GM12878 (cell line): ENCODE measurements at regions of chr12 and their contacts with region 1.

Region 1: DNA sequence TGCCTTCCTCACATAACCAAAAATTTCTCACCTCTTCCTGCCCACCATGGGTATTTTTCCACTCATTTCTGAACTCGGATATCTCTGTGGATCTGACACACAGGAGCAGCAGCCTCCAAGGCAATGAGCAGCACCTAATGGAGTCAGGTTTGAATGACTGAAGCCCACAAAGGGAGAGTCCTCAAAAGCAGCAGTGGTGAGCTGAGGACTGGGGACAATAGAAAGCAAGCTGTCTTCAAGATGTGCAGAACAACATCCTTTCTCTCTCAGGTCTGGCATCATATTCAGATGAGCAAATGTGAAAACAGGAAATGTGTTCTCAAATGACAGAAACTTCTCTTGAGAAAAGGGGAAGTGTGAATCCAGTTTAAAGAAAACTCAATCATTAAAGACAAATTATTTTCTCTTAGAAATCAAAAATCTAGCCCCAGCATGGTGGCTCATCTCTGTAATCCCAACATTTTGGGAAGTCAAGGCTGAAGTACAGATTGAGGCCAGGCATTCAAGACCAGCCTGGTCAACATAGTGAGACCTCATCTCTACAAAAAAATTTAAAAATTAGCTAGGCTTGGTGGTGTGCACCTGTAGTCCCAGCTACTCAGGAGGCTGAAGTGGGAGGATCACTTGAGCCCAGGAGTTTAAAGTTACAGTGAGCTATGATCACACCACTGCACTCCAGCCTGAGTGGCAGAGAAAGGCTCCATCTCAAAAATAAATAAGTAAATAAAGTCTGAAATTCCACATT is 54.2 kb downstream of the C12orf42 start:
- DNase-seq: peak; percentile 97
- ATAC-seq: peak; percentile 98
- H3K4me3 ChIP-seq: peak overlapping the region; percentile 58
- H3K27ac ChIP-seq: peak overlapping the region; percentile 71
- H3K4me1 ChIP-seq: peaks cover 22% of the 10 kb centered on the region
- H3K27me3 ChIP-seq: no peaks in the 10 kb centered on the region
- CTCF ChIP-seq: peak in 2 of 3 experiments; percentile 11 to 28; a peak in 1 of 6 replicates
- EP300 ChIP-seq: peak; percentile 72 to 96; a peak in 3 of 4 replicates
- POLR2A ChIP-seq: peak; percentile 64
- RAD21 ChIP-seq: peak; percentile 55

Region 2: GRCh38 chr12:102958073-102958829 is 483.4 kb before region 1 on chr12:
- CTCF ChIA-PET with region 1: no interaction called
- POLR2A ChIA-PET with region 1: no interaction called
- RAD21 ChIA-PET with region 1: interaction called, 3 read pairs
- SMC1A ChIA-PET with region 1: no interaction called
- in situ Hi-C with region 1: no loop called
- intact Hi-C with region 1: loop called (anchors 5 kb)
- DNase-seq: no peak
- ATAC-seq: peak; percentile 72
- H3K4me3 ChIP-seq: peak overlapping the region; percentile 81
- H3K27ac ChIP-seq: no peak overlapping the region
- H3K4me1 ChIP-seq: peaks cover 8% of the 10 kb centered on the region
- H3K27me3 ChIP-seq: peaks cover 0 to 24% of the 10 kb centered on the region in 2 experiments; a peak in 2 of 4 replicates
- CTCF ChIP-seq: peak in 2 of 3 experiments; percentile 7 to 15; a peak in 2 of 6 replicates
- EP300 ChIP-seq: no peak; a peak in 1 of 4 replicates
- POLR2A ChIP-seq: no peak
- RAD21 ChIP-seq: no peak

Region 3: DNA sequence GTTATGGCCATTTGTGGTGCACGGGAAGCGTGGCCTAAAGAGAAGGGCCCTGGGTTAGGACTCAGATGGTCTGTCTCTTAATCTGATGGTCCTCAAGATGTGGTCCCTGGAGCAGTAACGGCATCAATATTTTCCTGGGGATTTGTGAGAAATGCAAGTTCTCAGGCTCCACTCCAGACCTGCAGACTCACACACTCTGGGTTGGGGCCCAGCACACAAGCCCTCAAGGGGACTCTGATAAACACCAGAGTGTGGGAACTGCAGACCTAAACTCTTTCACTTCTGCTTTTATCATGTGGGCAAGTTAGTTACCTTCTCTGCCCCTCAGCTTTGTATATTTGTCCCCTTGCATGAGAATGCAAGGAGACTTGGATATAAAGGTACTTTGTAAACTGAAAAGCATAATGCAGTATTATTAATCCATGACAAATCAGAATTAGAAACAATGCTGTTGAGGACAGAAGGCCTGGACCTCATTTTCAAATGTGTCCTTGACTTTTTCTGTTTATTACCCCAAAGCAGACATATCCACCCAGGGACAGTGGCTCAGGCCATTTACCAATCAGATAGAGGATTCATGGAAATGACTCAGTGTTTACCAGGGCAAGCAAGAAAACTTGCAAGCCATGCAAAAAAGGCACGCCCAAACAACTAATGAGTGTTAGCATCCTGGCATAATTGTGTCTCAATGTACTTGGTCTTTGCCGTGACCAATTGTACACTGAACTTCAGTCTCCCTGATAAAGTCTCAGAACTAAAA is 327.1 kb before region 1 on chr12:
- CTCF ChIA-PET with region 1: no interaction called
- POLR2A ChIA-PET with region 1: no interaction called
- RAD21 ChIA-PET with region 1: no interaction called
- SMC1A ChIA-PET with region 1: interaction called, 6 read pairs
- in situ Hi-C with region 1: no loop called
- intact Hi-C with region 1: loop called (anchors 1 kb)
- DNase-seq: peak; percentile 95
- ATAC-seq: peak; percentile 98
- H3K4me3 ChIP-seq: no peak overlapping the region
- H3K27ac ChIP-seq: peak overlapping the region; percentile 80
- H3K4me1 ChIP-seq: peaks cover 19% of the 10 kb centered on the region
- H3K27me3 ChIP-seq: no peaks in the 10 kb centered on the region
- CTCF ChIP-seq: no peak
- EP300 ChIP-seq: peak; percentile 73 to 94; a peak in 3 of 4 replicates
- POLR2A ChIP-seq: no peak
- RAD21 ChIP-seq: peak; percentile 47

Region 4: GRCh38 chr12:103369929-103370328 is 71.7 kb before region 1 on chr12:
- CTCF ChIA-PET with region 1: no interaction called
- POLR2A ChIA-PET with region 1: no interaction called
- RAD21 ChIA-PET with region 1: interaction called, 3 read pairs
- SMC1A ChIA-PET with region 1: no interaction called
- in situ Hi-C with region 1: no loop called
- intact Hi-C with region 1: loop called (anchors 2 kb)
- DNase-seq: peak; percentile 78
- ATAC-seq: peak; percentile 89
- H3K4me3 ChIP-seq: no peak overlapping the region
- H3K27ac ChIP-seq: no peak overlapping the region
- H3K4me1 ChIP-seq: peaks cover 10% of the 10 kb centered on the region
- H3K27me3 ChIP-seq: no peaks in the 10 kb centered on the region
- CTCF ChIP-seq: no peak
- EP300 ChIP-seq: peak; percentile 76 to 86
- POLR2A ChIP-seq: no peak
- RAD21 ChIP-seq: no peak

Region 5: GRCh38 chr12:103470664-103471063 is 29.1 kb after region 1 on chr12:
- CTCF ChIA-PET with region 1: interaction called, 3 read pairs
- POLR2A ChIA-PET with region 1: no interaction called
- RAD21 ChIA-PET with region 1: interaction called, 4 read pairs
- SMC1A ChIA-PET with region 1: interaction called, 11 read pairs
- in situ Hi-C with region 1: no loop called
- intact Hi-C with region 1: no loop called
- DNase-seq: no peak
- ATAC-seq: peak; percentile 48
- H3K4me3 ChIP-seq: no peak overlapping the region
- H3K27ac ChIP-seq: no peak overlapping the region
- H3K4me1 ChIP-seq: peaks cover 11% of the 10 kb centered on the region
- H3K27me3 ChIP-seq: no peaks in the 10 kb centered on the region
- CTCF ChIP-seq: no peak
- EP300 ChIP-seq: peak in 1 of 2 experiments; percentile 7; a peak in 1 of 4 replicates
- POLR2A ChIP-seq: no peak
- RAD21 ChIP-seq: no peak